ENCODE measurements at regions of chr15 and their contacts with region 1.

Region 1: DNA sequence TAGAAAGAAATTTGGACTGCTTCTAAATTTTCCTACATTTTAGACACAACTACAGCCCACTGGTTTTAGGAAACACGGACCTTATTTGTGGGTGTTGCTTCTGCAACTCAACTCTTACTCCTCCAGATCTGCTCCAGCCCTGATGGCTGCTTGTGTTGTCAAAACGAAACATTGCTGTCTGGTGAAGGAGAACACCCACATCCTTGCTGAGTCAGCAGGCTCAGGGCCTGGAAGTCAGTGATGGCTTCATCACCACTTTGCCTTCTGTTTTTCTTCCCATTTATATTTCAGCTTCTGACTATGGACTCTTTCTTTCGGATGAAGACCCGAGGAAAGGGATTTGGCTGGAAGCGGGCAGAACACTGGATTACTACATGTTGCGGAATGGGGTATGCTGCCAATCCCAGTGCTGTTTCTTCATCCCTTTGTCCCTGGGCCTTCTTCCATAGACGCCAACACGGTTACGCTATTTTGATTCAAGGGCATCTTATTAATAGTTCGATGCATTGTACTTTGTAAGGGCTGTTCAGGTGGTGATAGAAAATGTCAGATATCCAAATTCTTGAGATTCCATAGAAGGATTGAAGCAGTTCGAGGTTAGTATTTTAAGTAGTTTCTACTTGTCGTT is 392.6 kb upstream of the TPM1 start:
- DNase-seq: no peak

Region 2: GRCh38 chr15:62691008-62691407 is 41.1 kb after region 1 on chr15:
- intact Hi-C with region 1: no loop called
- DNase-seq: no peak

Region 3: DNA sequence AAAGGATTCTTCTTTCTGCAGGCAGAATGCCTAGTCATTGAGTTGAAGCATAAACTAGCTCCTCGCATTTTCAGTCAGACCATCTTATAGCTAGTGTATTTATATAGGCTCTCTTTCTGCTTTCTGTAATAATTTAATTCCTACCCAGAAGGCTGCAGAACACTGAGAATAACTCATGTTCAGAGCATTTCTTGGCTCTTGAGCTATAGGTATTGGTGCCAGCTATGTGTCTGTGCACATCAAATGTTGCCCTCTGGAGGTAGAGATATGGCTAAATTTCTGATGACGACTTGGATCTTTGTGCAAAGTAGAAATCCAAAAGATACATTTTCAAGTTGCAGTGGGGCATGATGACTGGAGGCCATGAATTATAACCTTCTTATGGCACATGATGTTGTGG is 56.4 kb after region 1 on chr15:
- intact Hi-C with region 1: loop called (anchors 2 kb)
- DNase-seq: no peak

Measured in cardiac septum (tissue), 1 donor.